Activated CD4-positive, alpha-beta T cell treated with anti-CD3 and anti-CD28 coated beads, Interleukin-2, amount 10 ng/mL, durations not matched to agents 24 days and 14 days (primary cell): ENCODE measurements at regions of chr2 and their contacts with region 1.

Region 1: DNA sequence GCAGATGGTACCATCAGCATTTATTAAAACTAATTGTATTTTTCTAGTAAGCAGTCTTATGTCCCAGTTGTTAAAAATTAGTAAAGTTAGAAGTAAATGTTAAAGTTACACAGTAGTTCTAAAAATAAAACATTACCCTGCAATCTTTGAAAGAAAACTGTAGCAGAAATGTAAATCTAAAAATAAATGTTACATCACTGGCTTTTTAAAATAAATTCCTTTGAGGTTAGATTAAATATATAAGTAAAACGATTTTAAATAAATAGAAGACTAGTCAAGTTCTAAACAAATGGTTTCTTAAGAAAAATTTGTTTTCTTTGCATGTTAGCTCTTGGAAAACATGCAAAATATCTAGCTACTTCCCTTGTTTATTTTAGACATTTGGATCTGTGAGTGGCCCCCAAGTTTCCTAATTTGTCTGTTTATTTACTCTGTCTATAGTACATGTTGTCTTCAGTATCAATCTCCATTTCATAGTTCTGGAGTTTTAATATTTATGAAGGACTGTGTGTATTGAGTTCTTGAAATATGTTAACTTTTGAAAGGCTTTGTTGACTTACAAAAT is 58.2 kb downstream of the GLS start:
- DNase-seq: no peak
- H3K4me3 Mint-ChIP-seq: no peak overlapping the region
- H3K27ac Mint-ChIP-seq: no peak overlapping the region
- H3K4me1 Mint-ChIP-seq: peaks cover 1% of the 10 kb centered on the region
- H3K27me3 Mint-ChIP-seq: no peaks in the 10 kb centered on the region

Region 2: GRCh38 chr2:190887089-190887488 is 51.8 kb before region 1 on chr2:
- intact Hi-C with region 1: loop called (anchors 5 kb)
- DNase-seq: peak; percentile 48
- H3K4me3 Mint-ChIP-seq: no peak overlapping the region
- H3K27ac Mint-ChIP-seq: no peak overlapping the region
- H3K4me1 Mint-ChIP-seq: peaks cover 58% of the 10 kb centered on the region
- H3K27me3 Mint-ChIP-seq: no peaks in the 10 kb centered on the region